HepG2 (cell line): ENCODE measurements at regions of chr1 and their contacts with region 1.

Region 1: DNA sequence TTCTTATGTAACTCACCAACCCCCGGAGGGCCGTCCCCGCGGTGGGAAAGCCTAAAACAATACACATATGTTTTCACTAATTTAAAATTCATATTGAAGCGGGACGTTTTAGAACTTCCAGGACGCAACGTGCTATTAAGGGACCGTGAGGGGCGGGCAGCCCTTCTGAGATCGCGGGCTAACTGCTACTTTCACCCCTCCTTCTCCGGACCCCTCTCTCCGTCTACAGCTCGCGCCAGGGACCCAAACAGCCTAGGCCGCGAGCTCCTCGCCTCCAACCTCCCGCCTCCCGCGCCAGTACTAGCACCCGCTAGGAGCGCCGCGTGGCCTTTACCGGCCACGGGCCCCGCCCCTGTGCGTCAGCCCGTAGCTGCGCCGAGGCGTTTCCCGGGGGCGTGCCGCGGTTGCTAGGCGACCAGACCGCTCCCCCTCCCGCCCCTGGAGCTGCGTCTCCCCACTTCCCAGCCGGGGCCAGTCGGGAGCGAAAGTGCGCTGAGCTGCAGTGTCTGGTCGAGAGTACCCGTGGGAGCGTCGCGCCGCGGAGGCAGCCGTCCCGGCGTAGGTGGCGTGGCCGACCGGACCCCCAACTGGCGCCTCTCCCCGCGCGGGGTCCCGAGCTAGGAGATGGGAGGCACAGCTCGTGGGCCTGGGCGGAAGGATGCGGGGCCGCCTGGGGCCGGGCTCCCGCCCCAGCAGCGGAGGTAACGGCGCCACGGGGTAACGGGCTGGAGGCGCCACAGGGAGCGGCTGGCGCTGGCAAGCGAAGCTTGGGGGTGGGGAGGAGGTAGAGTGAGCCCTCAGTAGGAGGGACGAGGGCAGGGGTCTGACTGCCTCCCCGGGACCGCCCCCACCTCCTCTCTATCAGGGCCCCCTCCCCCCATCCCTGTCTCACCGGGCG is at the start of gene DYRK3:
- DNase-seq: peak; percentile 76
- ATAC-seq: peak; percentile 96
- H3K4me3 ChIP-seq: peak within 1 kb of the TSS; percentile 68 to 83 (median 81)
- H3K27ac ChIP-seq: no peak within 1 kb of the TSS
- H3K4me1 ChIP-seq: peaks cover 26% of the 10 kb centered on the region
- H3K27me3 ChIP-seq: peaks cover 0 to 3% of the 10 kb centered on the region in 2 experiments; a peak in 2 of 5 replicates
- CTCF ChIP-seq: peak; percentile 25; the same call in 1 of the 2 replicates
- EP300 ChIP-seq: no peak
- POLR2A ChIP-seq: peak; percentile 74 to 91
- RAD21 ChIP-seq: no peak
- total RNA-seq, gene DYRK3: 2.8 and 4.1 TPM in 2 replicates

Region 2: GRCh38 chr1:206606856-206607255 is 28.5 kb before region 1 on chr1:
- CTCF ChIA-PET with region 1: interaction called, 4 read pairs
- POLR2A ChIA-PET with region 1: interaction called, 19 read pairs
- in situ Hi-C with region 1: no loop called
- intact Hi-C with region 1: loop called (anchors 1 kb)
- DNase-seq: peak; percentile 56
- ATAC-seq: peak; percentile 89
- H3K4me3 ChIP-seq: no peak overlapping the region
- H3K27ac ChIP-seq: no peak overlapping the region
- H3K4me1 ChIP-seq: peaks cover 10% of the 10 kb centered on the region
- H3K27me3 ChIP-seq: no peaks in the 10 kb centered on the region
- CTCF ChIP-seq: peak; percentile 23; the same call in 1 of the 2 replicates
- EP300 ChIP-seq: no peak
- POLR2A ChIP-seq: no peak
- RAD21 ChIP-seq: no peak

Region 3: GRCh38 chr1:206612129-206612876 is 23.0 kb before region 1 on chr1 and contains the start of gene EIF2D:
- CTCF ChIA-PET with region 1: interaction called, 4 read pairs
- POLR2A ChIA-PET with region 1: interaction called, 19 read pairs
- in situ Hi-C with region 1: no loop called
- intact Hi-C with region 1: loop called (anchors 1 kb)
- DNase-seq: peak; percentile 85
- ATAC-seq: peak; percentile 97
- H3K4me3 ChIP-seq: peak within 1 kb of the TSS; percentile 85 to 88 (median 88)
- H3K27ac ChIP-seq: peak within 1 kb of the TSS; percentile 93
- H3K4me1 ChIP-seq: peaks cover 10% of the 10 kb centered on the region
- H3K27me3 ChIP-seq: no peaks in the 10 kb centered on the region
- CTCF ChIP-seq: peak; percentile 94
- EP300 ChIP-seq: peak; percentile 58 to 62; a peak in 2 of 4 replicates
- POLR2A ChIP-seq: peak; percentile 88 to 96
- RAD21 ChIP-seq: peak; percentile 73
- total RNA-seq, gene EIF2D: 45.1 and 47.5 TPM in 2 replicates

Region 4: DNA sequence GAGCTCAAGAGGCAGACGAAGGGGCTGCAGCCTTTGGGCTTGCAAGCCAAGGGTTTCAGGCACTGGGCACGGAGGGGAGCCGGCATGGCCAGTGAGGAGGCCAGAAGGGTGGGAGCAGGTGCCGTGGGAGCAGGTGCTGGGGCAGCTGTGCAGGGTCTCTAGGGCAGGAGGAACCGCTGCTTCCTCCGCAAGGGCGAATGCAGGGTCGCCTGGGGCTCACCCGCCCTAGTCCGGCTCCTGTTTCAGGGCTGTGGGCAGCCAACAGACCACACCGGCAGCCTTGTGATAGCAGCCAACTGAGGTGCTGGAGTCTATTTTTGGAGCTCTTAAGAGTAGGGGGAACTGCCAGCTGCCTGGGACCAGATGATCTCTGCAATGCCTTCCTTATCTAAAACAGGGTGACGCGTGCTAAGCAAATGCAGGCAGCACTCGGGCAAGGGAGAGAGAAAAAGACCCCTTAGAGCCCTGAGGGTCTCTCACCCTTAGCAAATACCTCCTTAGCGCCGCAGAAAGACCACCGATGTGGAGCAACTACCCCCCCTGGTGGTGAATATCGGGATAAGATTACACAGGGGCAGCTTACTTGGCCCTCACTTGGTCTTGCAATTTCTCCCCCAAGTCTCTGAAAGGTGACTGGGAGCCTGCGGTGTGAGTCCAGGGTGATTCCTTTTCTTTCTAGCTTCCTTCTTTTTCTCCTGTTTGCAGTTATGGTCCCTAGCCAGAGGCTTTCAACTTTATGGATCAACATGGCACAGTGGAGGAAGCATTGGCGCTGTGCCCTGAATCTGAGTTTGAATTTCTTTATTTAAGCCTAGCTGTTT is 28.7 kb after region 1 on chr1:
- CTCF ChIA-PET with region 1: interaction called, 33 read pairs
- POLR2A ChIA-PET with region 1: interaction called, 14 read pairs
- in situ Hi-C with region 1: loop called (anchors 5 kb)
- intact Hi-C with region 1: loop called (anchors 1 kb)
- DNase-seq: peak; percentile 43
- ATAC-seq: peak; percentile 83
- H3K4me3 ChIP-seq: no peak overlapping the region
- H3K27ac ChIP-seq: no peak overlapping the region
- H3K4me1 ChIP-seq: peaks cover 7% of the 10 kb centered on the region
- H3K27me3 ChIP-seq: peaks cover 2 to 29% of the 10 kb centered on the region in 2 experiments
- CTCF ChIP-seq: peak; percentile 84
- EP300 ChIP-seq: no peak
- POLR2A ChIP-seq: no peak
- RAD21 ChIP-seq: peak; percentile 71

Region 5: DNA sequence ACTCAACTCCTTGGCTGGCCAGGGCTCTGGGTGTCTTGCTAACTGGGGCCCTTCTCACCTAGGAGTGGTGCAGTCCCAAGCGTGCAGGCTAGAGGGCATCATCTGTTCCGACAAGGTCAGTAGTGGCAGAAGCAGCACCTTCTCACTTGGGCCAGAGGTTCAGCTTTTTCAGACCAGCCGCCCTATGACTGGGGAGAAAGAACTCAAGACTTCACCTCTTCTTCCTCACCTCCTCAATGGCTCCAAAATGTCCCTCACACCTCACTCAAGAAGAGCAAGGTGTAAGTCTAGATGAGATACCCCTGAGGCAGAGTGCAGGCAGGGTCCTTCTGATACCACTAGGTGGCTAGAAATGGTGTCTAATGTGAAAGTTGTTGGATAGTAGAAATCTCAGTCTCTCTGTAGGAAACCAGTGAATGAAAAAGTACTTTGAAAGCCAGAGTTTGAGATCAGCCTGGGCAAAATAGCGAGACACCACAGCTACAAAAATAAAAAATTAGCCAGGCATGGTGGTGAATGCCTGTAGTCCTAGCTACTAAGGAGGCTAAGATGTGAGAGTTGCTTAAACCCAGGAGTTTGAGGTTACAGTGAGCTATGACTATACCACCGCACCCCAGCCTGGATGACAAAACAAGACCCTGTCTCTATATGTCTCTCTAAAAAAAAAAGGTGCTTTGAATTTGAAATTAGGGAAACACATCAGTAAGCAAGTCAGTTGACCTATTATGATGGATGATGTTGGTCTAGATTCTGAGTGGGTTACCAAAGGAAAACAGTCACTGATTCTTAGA is 221.5 kb after region 1 on chr1:
- CTCF ChIA-PET with region 1: no interaction called
- POLR2A ChIA-PET with region 1: no interaction called
- in situ Hi-C with region 1: no loop called
- intact Hi-C with region 1: no loop called
- DNase-seq: peak; percentile 5
- ATAC-seq: peak; percentile 77
- H3K4me3 ChIP-seq: no peak overlapping the region
- H3K27ac ChIP-seq: no peak overlapping the region
- H3K4me1 ChIP-seq: no peaks in the 10 kb centered on the region
- H3K27me3 ChIP-seq: peaks cover 0 to 3% of the 10 kb centered on the region in 2 experiments; a peak in 2 of 5 replicates
- CTCF ChIP-seq: peak; percentile 20; the same call in 1 of the 2 replicates
- EP300 ChIP-seq: no peak
- POLR2A ChIP-seq: no peak
- RAD21 ChIP-seq: no peak